HepG2 (cell line): ENCODE measurements at regions of chr11 and their contacts with region 1.

Region 1: GRCh38 chr11:71928737-71929452 is at the start of gene RNF121:
- DNase-seq: peak; percentile 92
- ATAC-seq: peak; percentile 97
- H3K4me3 ChIP-seq: peak within 1 kb of the TSS; percentile 80 to 89 (median 84)
- H3K27ac ChIP-seq: peak within 1 kb of the TSS; percentile 92
- H3K4me1 ChIP-seq: peaks cover 51% of the 10 kb centered on the region
- H3K27me3 ChIP-seq: no peaks in the 10 kb centered on the region; a peak in 1 of 5 replicates
- CTCF ChIP-seq: no peak
- EP300 ChIP-seq: no peak
- POLR2A ChIP-seq: peak; percentile 62 to 89; a peak in 3 of 4 replicates
- RAD21 ChIP-seq: no peak
- total RNA-seq, gene RNF121: 18.9 and 28.6 TPM in 2 replicates

Region 2: DNA sequence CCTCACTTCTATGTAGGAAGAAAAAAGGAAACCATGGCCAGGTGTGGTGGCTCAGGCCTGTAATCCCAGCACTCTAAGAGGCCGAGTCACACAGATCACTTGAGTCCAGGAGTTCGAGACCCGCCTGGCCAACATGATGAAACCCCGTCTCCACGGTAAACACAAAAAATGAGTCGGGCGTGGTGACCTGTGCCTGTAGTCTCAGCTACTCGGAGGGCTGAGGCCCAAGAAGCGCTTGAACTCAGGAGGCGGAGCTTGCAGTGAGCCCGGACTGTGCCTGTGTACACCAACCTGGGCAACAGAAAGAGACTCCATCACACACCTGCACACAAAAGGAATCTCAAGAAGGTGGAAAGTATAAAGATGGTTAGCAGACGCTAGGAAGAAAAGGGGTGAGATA is 32.9 kb before region 1 on chr11:
- CTCF ChIA-PET with region 1: no interaction called
- POLR2A ChIA-PET with region 1: no interaction called
- in situ Hi-C with region 1: no loop called
- intact Hi-C with region 1: no loop called
- DNase-seq: no peak
- ATAC-seq: no peak
- H3K4me3 ChIP-seq: no peak overlapping the region
- H3K27ac ChIP-seq: no peak overlapping the region
- H3K4me1 ChIP-seq: no peaks in the 10 kb centered on the region
- H3K27me3 ChIP-seq: no peaks in the 10 kb centered on the region
- CTCF ChIP-seq: no peak
- EP300 ChIP-seq: no peak
- POLR2A ChIP-seq: no peak
- RAD21 ChIP-seq: no peak

Region 3: DNA sequence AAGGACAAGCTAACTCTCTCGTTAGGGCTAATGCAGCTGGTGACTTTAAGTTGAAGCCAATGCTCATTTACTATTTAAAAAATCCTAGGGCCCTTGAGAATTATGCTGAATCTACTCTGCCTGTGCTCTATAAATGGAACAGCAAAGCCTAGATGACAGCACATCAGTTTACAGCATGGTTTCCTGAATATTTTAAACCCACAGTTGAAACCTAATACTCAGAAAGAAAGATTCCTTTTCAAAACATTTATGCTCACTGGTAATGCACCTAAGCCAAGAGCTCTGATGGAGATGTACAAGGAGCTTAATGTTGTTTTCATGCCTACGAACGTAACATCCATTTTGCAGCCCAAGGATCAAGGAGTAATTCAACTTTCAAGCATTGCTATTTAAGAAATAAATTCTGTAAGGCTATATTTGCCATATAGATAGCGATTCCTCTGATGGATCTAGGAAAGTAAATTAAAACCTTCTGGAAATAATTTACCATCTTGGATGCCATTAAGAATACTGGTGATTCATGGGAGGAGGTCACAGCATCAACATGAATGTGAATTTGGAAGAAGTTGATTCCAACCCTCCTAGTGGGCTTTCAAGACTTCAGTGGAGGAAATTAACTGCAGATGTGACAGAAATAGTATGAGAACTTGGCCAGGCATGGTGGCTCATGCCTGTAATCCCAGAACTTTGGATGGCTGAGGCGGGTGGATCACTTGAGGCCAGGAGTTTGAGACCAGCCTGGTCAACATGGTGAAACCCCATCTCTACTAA is 15.0 kb before region 1 on chr11:
- CTCF ChIA-PET with region 1: no interaction called
- POLR2A ChIA-PET with region 1: interaction called, 11 read pairs
- in situ Hi-C with region 1: no loop called
- intact Hi-C with region 1: no loop called
- DNase-seq: no peak
- ATAC-seq: no peak
- H3K4me3 ChIP-seq: no peak overlapping the region
- H3K27ac ChIP-seq: no peak overlapping the region
- H3K4me1 ChIP-seq: peaks cover 15% of the 10 kb centered on the region
- H3K27me3 ChIP-seq: no peaks in the 10 kb centered on the region
- CTCF ChIP-seq: no peak
- EP300 ChIP-seq: no peak
- POLR2A ChIP-seq: no peak
- RAD21 ChIP-seq: no peak

Region 4: GRCh38 chr11:71946144-71946571 is 17.3 kb after region 1 on chr11:
- CTCF ChIA-PET with region 1: no interaction called
- POLR2A ChIA-PET with region 1: interaction called, 34 read pairs
- in situ Hi-C with region 1: no loop called
- intact Hi-C with region 1: no loop called
- DNase-seq: peak; percentile 22
- ATAC-seq: no peak
- H3K4me3 ChIP-seq: no peak overlapping the region
- H3K27ac ChIP-seq: peak overlapping the region; percentile 92
- H3K4me1 ChIP-seq: peaks cover 71% of the 10 kb centered on the region
- H3K27me3 ChIP-seq: no peaks in the 10 kb centered on the region
- CTCF ChIP-seq: no peak
- EP300 ChIP-seq: no peak
- POLR2A ChIP-seq: no peak
- RAD21 ChIP-seq: no peak

Region 5: GRCh38 chr11:72015511-72016171 is 86.7 kb after region 1 on chr11:
- CTCF ChIA-PET with region 1: no interaction called
- POLR2A ChIA-PET with region 1: no interaction called
- in situ Hi-C with region 1: no loop called
- intact Hi-C with region 1: no loop called
- DNase-seq: peak; percentile 13
- ATAC-seq: peak; percentile 63
- H3K4me3 ChIP-seq: no peak overlapping the region
- H3K27ac ChIP-seq: no peak overlapping the region
- H3K4me1 ChIP-seq: no peaks in the 10 kb centered on the region
- H3K27me3 ChIP-seq: no peaks in the 10 kb centered on the region
- CTCF ChIP-seq: peak; percentile 70
- EP300 ChIP-seq: no peak
- POLR2A ChIP-seq: no peak
- RAD21 ChIP-seq: no peak